ENCODE measurements at regions of chr17 and their contacts with region 1.

Region 1: DNA sequence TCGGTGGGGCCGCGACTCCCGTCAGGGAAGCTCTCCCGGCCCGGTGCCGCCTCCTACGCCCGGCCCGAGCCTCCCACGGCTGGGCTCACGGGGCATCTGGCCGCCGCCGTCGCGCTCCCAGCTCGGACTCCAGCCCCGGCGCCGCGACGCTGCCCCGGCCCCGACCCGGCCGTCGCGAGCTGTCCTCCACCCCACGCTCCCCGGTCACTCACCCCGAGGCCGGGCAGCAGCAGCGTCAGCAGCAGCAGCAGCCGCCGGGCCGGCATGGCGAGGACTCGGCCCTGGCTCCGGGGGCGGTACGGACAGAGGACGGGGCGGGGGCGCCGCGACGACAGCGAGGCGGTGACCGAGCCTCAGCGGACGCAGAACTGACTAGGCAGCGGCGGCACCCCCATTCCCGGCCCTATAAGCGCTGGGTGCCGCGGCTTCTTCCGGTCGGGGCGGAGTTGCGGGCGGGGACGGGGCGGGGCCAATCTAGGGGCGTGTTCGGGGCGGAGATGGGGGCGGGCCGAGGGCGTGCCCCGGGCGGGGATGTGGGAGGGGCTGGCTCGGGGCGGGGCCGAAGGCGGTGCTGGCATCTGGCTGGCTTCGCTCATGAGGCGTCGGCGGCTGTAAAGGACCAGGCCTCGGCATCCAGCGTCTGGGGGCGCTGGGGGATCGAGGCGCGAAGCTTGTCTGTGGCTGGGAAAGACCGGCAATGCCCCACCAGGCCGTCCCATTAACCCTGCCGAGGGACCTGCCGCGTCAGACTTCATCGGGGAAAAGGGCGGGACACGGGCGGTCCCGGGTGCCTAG is at the start of gene ERN1:
- H3K4me3 ChIP-seq: peak within 1 kb of the TSS; percentile 83
- H3K27ac ChIP-seq: peak within 1 kb of the TSS; percentile 70
- H3K4me1 ChIP-seq: peaks cover 8% of the 10 kb centered on the region
- CTCF ChIP-seq: no peak

Region 2: DNA sequence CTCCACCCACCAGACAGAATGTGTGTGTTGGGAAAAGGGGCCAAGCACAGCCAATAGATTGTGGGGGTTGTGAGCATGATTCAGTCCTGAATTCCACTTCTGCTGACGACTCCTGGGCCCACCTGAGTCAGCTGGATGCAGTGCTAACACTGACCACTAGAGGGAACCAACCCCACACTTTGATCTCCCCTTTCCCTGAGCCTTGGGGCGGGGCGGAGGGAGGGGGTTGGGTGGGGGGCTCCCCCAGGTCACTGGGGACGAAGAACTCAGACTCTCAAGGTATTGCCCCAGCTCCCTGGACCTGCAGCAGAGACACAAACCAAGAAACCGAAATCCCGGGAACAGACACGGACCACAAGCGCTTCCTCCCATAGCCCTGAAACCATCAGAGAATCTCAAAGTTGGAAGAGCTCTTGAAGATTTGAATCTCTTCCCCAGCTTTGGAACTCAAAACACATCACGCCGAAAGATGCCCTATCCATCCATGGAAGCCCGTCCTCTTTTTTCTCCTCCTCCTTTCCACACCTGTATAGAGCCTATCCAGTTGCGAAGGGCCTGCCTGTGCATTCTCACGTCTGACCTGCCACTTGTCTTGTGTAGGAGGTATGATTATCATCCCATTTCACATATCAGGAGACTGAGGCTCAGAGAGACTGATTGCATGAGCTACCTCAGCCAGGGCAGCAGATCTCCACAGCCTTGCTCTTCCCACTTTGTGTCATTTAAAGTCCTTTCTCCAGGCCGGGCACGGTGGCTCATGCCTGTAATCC is 218.1 kb before region 1 on chr17:
- CTCF ChIA-PET with region 1: interaction called, 29 read pairs
- POLR2A ChIA-PET with region 1: no interaction called
- H3K4me3 ChIP-seq: no peak overlapping the region
- H3K27ac ChIP-seq: no peak overlapping the region
- H3K4me1 ChIP-seq: no peaks in the 10 kb centered on the region
- CTCF ChIP-seq: no peak

Region 3: GRCh38 chr17:64056269-64057005 is 73.5 kb before region 1 on chr17:
- CTCF ChIA-PET with region 1: interaction called, 99 read pairs
- POLR2A ChIA-PET with region 1: no interaction called
- H3K4me3 ChIP-seq: no peak overlapping the region
- H3K27ac ChIP-seq: no peak overlapping the region
- H3K4me1 ChIP-seq: no peaks in the 10 kb centered on the region
- CTCF ChIP-seq: no peak

Region 4: DNA sequence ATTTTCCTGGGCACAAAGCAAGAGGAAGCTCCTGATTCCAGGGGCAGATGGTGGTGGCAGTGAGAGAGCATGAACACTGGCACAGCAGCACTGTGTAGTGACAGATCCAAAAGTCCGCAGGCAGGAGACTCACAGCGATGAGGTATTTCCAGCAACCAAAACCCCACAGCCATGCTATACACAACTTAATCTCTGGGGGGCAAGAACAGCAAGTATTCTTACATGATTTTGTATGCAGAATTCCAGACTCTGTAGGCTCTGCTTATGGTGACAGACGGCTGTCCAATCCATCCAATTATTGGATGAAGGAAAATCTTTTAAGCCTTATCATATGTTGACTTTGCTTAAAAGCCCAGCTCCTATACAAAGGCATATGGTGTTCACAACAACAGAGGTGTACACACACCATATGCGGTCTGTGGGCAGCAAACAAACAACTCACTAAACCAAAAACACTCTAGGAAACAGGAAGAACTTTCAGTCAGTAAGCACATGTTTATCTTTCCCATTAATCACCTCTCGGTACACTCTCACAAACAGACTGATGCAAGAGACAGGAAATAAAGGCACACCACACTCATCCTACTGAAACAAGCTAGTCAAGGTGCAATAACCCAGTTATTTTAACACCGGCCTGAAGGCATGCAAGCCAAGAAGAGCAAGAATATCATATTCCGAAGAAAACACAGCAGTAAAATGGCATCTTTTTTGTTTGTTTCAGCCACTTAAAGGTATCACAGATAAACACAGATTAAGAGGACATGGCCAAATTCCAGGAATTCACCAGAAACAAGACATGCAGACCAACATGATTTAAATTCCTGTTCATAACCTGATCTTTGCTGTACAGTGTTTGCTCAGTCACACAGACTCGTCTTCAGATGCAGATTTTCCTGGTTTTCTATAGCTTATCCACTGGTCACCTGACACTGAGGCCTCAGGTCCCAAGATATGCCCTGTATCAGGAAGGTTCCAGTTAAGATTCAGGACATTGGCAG is 47.9 kb before region 1 on chr17:
- CTCF ChIA-PET with region 1: interaction called, 22 read pairs
- POLR2A ChIA-PET with region 1: interaction called, 3 read pairs
- H3K4me3 ChIP-seq: no peak overlapping the region
- H3K27ac ChIP-seq: peak overlapping the region; percentile 46
- H3K4me1 ChIP-seq: peaks cover 28% of the 10 kb centered on the region
- CTCF ChIP-seq: no peak

Region 5: DNA sequence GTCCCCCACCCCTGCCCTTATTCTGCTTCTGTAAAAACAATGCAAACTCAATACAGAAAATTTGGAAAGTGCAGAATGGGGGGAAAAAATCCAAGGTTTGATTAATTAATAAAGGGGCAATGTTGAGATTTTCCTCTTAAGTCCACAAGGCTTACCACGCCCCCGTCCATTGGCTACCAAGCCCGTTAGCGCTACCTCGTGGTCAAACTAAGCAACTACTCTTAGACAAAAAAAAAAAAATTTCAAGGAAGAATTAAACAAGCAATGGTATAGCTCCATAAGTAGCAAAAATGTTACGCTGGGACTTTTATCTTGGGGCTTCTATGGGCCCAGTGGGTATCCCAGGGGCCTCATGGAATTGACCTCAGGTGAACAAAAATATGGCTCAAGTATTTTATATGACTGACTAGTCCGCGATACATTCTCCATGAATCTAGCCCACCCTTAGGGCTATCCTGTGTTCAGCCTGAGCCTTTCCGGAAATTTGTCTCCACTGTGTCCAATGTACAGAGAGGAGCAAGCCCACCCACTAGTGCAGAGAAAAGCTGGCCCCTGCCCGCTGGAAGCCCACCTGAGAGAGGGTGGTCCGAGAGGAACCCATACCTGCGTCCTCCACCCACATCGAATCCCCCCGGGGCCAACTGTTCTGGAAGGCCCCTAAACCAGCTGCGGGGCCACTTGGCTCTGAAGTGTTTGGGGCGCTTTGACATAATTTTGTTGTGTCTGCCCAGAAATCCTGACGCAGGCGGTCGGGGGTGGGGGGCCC is 152.2 kb after region 1 on chr17:
- CTCF ChIA-PET with region 1: interaction called, 16 read pairs
- POLR2A ChIA-PET with region 1: no interaction called
- H3K4me3 ChIP-seq: no peak overlapping the region
- H3K27ac ChIP-seq: no peak overlapping the region
- H3K4me1 ChIP-seq: no peaks in the 10 kb centered on the region
- CTCF ChIP-seq: peak; percentile 48; the same call in 1 of the 2 replicates

Region 6: GRCh38 chr17:64326395-64327054 is 196.6 kb after region 1 on chr17:
- CTCF ChIA-PET with region 1: no interaction called
- POLR2A ChIA-PET with region 1: no interaction called
- H3K4me3 ChIP-seq: no peak overlapping the region
- H3K27ac ChIP-seq: no peak overlapping the region
- H3K4me1 ChIP-seq: no peaks in the 10 kb centered on the region
- CTCF ChIP-seq: no peak